H1 (cell line): ENCODE measurements at regions of chr5 and their contacts with region 1.

Region 1: GRCh38 chr5:172714491-172715421 is 56.2 kb downstream of the DUSP1 start:
- DNase-seq: peak in 1 of 2 experiments; percentile 88
- H3K4me3 ChIP-seq: no peak overlapping the region
- H3K27ac ChIP-seq: no peak overlapping the region
- H3K4me1 ChIP-seq: peaks cover 0 to 3% (median 2%) of the 10 kb centered on the region in 4 experiments; a peak in 2 of 7 replicates
- H3K27me3 ChIP-seq: peaks cover 0 to 11% (median 7%) of the 10 kb centered on the region in 4 experiments; a peak in 4 of 7 replicates
- CTCF ChIP-seq: peak in 2 of 3 experiments; percentile 80 to 91; a peak in 3 of 4 replicates
- EP300 ChIP-seq: no peak
- POLR2A ChIP-seq: no peak
- RAD21 ChIP-seq: peak; percentile 51 to 70

Region 2: DNA sequence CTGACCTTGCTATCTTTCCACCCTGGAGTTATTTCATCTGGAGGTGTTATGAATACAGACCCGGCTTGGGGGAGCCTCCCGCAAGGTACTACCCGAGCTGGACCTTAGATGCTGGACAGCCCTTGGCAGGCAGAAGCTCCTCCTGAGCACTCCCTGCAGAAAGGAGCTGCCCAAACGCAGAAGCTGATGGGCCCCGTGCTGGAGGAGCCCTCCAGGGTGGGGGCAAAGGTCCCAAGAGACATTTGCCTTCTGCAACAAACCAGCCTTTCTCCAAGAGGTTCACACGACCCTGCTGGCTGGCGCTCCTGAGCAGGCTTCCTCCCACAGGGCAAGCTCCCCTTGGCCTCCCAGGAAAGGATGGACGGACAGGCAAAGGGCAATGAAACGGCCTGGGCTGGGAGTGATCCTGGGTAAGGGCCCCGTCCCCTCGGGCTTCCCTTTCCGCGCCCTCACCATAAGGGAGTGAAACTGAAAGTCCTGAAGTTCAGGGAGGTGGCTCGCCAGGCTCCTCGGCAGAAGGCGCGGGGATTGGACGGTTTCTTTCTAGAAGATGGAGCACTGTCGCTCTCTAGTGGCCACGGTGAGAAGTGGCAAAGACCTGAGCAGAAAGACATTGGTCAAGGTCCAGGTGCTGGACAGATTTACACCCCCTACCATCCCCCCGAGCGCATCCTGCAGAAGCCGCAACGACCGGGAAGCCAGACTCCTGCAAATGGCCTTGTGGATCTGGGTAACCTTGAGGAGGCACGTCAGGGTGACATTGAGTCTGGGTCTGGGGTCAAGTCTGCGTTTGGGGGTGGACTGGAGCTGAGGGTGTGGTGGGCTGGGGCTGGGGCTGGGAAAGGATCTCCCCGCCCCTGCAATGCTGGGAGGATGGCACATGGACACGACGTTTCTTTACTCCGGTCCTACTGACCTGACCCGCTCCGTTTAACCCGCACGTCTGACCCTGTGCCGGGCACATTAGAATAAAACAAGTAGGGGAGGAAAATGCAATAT is 17.3 kb before region 1 on chr5:
- CTCF ChIA-PET with region 1: interaction called, 30 read pairs
- POLR2A ChIA-PET with region 1: no interaction called
- DNase-seq: peak in 1 of 2 experiments; percentile 91
- H3K4me3 ChIP-seq: peak overlapping the region in 3 of 4 experiments; percentile 19 to 50 (median 35); a peak in 4 of 8 replicates
- H3K27ac ChIP-seq: no peak overlapping the region
- H3K4me1 ChIP-seq: peaks cover 7 to 25% (median 15%) of the 10 kb centered on the region in 4 experiments
- H3K27me3 ChIP-seq: peaks cover 0 to 11% (median 1%) of the 10 kb centered on the region in 4 experiments; a peak in 4 of 7 replicates
- CTCF ChIP-seq: peak; percentile 75 to 94 (median 91)
- EP300 ChIP-seq: no peak
- POLR2A ChIP-seq: no peak
- RAD21 ChIP-seq: peak; percentile 96 to 98

Region 3: GRCh38 chr5:172749881-172750633 is 35.3 kb after region 1 on chr5:
- CTCF ChIA-PET with region 1: interaction called, 11 read pairs
- POLR2A ChIA-PET with region 1: no interaction called
- DNase-seq: no peak
- H3K4me3 ChIP-seq: no peak overlapping the region
- H3K27ac ChIP-seq: no peak overlapping the region
- H3K4me1 ChIP-seq: peaks cover 0 to 4% (median 0%) of the 10 kb centered on the region in 4 experiments; a peak in 2 of 7 replicates
- H3K27me3 ChIP-seq: peaks cover 0 to 11% (median 9%) of the 10 kb centered on the region in 4 experiments; a peak in 6 of 7 replicates
- CTCF ChIP-seq: no peak
- EP300 ChIP-seq: no peak
- POLR2A ChIP-seq: no peak
- RAD21 ChIP-seq: no peak

Region 4: GRCh38 chr5:172770675-172771438 is 56.1 kb after region 1 on chr5 and contains the start of gene DUSP1:
- CTCF ChIA-PET with region 1: interaction called, 50 read pairs
- POLR2A ChIA-PET with region 1: interaction called, 28 read pairs
- DNase-seq: peak; percentile 83 to 96
- H3K4me3 ChIP-seq: peak within 1 kb of the TSS; percentile 53 to 83 (median 80)
- H3K27ac ChIP-seq: peak within 1 kb of the TSS; percentile 90
- H3K4me1 ChIP-seq: peaks cover 3 to 18% (median 5%) of the 10 kb centered on the region in 4 experiments; a peak in 6 of 7 replicates
- H3K27me3 ChIP-seq: peaks cover 0 to 23% (median 15%) of the 10 kb centered on the region in 4 experiments; a peak in 6 of 7 replicates
- CTCF ChIP-seq: peak in 2 of 3 experiments; percentile 58 to 82; a peak in 3 of 4 replicates
- EP300 ChIP-seq: no peak; a peak in 1 of 3 replicates
- POLR2A ChIP-seq: peak in 1 of 2 experiments; percentile 98; a peak in 2 of 3 replicates
- RAD21 ChIP-seq: peak; percentile 27 to 54; a peak in 3 of 4 replicates
- total RNA-seq, gene DUSP1: 6.5 and 8.6 TPM in 2 replicates

Region 5: GRCh38 chr5:172860520-172861443 is 146.0 kb after region 1 on chr5:
- CTCF ChIA-PET with region 1: interaction called, 17 read pairs
- POLR2A ChIA-PET with region 1: no interaction called
- DNase-seq: no peak
- H3K4me3 ChIP-seq: no peak overlapping the region
- H3K27ac ChIP-seq: no peak overlapping the region; the same call in 1 of the 2 replicates
- H3K4me1 ChIP-seq: peaks cover 0 to 3% (median under 1%) of the 10 kb centered on the region in 4 experiments; a peak in 3 of 7 replicates
- H3K27me3 ChIP-seq: no peaks in the 10 kb centered on the region; a peak in 1 of 7 replicates
- CTCF ChIP-seq: no peak
- EP300 ChIP-seq: no peak
- POLR2A ChIP-seq: no peak
- RAD21 ChIP-seq: no peak

Region 6: DNA sequence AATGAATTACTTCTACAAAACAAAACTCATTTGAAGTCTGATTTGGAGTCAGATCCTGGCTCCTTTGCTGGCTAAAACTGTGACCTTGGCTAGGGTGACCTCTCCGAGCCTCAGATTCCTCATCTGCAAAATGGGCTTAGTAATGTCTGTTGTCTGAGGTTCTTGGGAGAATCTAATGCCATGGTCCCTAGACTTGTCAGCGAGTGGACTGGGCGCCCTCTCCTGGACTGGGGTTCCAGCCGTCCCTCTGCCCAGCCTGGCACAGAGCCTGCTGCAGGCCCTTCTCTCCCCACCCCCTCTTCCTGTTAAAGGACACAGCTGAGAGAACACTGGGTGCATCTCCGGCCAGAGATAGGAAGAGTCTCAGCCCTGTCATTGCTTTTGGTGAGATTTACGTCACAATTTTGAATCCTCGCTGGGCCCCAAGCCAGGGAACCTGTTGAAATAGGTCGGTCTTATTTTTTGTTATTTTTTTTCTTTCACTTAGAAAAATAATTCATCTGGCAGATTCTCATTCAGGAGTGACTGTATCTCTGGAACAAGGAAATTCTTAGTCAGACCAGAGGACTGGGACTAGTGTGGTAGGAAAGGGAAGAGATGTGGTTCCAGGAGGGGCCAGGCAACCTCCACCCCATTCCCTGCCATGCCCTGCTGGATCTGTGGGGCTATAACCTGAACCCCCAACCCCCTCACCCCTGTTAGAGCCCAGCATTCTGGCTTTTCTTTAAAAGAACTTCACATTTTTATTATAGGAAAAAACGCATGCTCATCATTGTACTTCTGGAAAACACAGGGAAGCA is 196.3 kb after region 1 on chr5:
- CTCF ChIA-PET with region 1: interaction called, 31 read pairs
- POLR2A ChIA-PET with region 1: no interaction called
- DNase-seq: peak in 1 of 2 experiments; percentile 55
- H3K4me3 ChIP-seq: no peak overlapping the region
- H3K27ac ChIP-seq: no peak overlapping the region
- H3K4me1 ChIP-seq: peaks cover 0 to 8% (median 3%) of the 10 kb centered on the region in 4 experiments; a peak in 4 of 7 replicates
- H3K27me3 ChIP-seq: no peaks in the 10 kb centered on the region
- CTCF ChIP-seq: peak; percentile 43 to 50 (median 46)
- EP300 ChIP-seq: no peak
- POLR2A ChIP-seq: no peak
- RAD21 ChIP-seq: peak; percentile 52 to 60

Region 7: GRCh38 chr5:172939071-172939470 is 224.3 kb after region 1 on chr5:
- CTCF ChIA-PET with region 1: interaction called, 206 read pairs
- POLR2A ChIA-PET with region 1: no interaction called
- DNase-seq: peak in 1 of 2 experiments; percentile 65
- H3K4me3 ChIP-seq: no peak overlapping the region
- H3K27ac ChIP-seq: no peak overlapping the region; the same call in 1 of the 2 replicates
- H3K4me1 ChIP-seq: peaks cover 4 to 15% (median 9%) of the 10 kb centered on the region in 4 experiments; a peak in 5 of 7 replicates
- H3K27me3 ChIP-seq: no peaks in the 10 kb centered on the region
- CTCF ChIP-seq: peak; percentile 82 to 93 (median 83)
- EP300 ChIP-seq: no peak
- POLR2A ChIP-seq: no peak
- RAD21 ChIP-seq: peak; percentile 38 to 53